ENCODE measurements at regions of chr14 and their contacts with region 1.

Region 1: DNA sequence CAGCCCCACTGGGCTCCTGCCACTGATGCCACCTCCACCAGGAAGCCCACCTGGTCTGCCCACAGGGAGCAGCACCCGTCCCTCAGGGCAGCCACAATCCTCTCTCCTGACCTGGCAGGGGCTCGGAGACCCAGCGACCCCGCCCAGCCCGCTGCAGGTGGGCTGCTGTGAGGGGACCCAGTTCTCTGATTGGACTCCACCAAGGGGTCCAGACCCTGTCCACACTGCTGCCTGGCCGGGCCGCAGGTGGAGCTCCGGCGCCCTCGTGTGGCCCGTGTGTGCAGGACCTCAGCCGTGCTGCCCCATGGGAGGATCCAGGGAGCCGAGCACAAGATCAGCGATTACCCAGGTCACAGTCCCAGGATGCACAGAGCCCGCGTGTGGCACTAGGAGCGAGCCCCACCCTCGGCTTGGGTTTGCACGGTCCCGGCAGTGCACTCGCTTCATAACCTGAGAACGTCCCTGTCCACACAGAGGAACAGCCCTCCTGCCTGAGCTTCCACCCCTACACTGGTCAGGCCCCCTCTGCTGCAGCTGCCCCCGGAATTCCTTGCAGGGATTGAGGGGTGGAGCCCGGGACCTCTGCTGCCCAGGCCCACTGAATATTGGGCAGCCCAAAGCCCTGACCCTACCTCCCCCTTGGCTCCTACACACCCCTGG is 35.4 kb upstream of the TMEM179 start:
- DNase-seq: no peak
- ATAC-seq: peak; percentile 83

Region 2: GRCh38 chr14:104460791-104461651 is 179.0 kb before region 1 on chr14:
- intact Hi-C with region 1: no loop called
- DNase-seq: no peak
- ATAC-seq: no peak

Region 3: DNA sequence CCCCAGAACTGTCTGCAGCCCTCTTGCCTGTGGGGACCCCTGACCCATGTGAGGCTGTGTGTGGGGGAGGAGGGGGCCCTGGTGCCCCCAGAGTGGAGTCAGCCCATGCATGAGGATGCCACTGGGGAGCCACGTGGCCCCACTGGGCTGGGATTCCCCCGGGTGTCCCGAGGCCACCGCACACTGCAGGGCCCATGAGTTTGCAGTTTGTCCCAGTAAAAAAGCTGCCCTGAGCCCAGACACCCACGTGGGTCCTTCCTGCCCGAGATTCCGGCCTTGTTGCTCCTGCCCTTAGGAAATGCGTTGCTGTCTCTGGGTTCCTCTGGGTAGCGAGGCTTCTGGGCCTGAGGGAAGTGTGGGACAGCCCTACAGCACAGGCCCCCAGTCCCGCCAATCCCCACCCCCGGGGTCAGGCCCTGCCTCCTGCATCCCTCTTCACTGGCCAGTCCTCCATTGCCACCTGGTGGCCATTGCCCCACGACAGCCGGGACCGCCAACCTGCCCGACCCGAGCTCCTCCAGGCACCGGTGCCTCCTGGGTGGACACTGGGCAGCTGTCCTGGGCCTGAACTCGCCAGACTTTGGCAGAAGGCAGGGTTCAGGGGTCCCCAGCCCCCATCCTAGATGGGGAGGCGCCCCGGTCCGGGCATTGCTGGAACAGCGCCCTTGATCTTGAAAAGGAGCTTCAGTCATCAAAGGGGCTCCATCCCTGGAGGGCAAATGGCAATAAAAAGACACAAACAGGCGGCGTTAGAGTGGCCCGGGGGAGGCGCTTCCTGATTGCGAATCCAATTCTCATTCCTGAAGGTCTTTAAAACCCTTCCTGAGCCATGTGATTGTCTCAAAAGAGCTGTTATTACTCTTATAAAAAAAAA is 76.0 kb before region 1 on chr14:
- intact Hi-C with region 1: loop called (anchors 5 kb)
- DNase-seq: peak; percentile 13
- ATAC-seq: peak; percentile 72

Measured in Right ventricle myocardium inferior (tissue), 1 donor.